HEK293 (cell line): ENCODE measurements at regions of chr2 and their contacts with region 1.

Region 1: DNA sequence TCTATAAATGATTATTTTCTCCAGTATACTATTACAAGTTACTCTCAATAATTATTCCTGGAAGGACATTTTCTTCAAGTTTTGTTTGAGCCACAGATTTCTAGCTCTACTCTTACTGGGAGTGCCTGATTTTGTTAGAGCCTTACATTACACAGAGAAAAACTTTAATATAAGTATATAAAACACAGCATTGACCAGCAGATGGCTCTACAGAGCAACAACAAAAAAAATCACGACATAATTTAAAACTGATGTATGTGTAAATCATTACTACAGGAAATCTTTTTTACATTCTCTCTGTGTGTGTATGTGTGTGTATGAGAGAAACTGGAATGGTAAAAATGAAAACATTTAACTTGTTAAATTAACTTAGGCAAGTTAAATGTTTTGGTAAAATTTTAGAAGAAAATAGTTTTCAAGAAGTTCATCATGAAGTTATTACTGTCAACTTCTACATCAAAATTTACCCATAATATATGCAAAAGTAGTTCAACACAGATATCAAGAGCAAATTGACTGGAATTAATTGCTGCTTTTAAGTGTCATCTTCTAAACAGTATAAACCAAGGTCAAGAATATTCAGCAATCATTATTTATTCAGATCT is 103.3 kb downstream of the MDH1 start:
- H3K4me3 ChIP-seq: no peak overlapping the region
- H3K27ac ChIP-seq: no peak overlapping the region
- H3K4me1 ChIP-seq: no peaks in the 10 kb centered on the region
- CTCF ChIP-seq: no peak

Region 2: DNA sequence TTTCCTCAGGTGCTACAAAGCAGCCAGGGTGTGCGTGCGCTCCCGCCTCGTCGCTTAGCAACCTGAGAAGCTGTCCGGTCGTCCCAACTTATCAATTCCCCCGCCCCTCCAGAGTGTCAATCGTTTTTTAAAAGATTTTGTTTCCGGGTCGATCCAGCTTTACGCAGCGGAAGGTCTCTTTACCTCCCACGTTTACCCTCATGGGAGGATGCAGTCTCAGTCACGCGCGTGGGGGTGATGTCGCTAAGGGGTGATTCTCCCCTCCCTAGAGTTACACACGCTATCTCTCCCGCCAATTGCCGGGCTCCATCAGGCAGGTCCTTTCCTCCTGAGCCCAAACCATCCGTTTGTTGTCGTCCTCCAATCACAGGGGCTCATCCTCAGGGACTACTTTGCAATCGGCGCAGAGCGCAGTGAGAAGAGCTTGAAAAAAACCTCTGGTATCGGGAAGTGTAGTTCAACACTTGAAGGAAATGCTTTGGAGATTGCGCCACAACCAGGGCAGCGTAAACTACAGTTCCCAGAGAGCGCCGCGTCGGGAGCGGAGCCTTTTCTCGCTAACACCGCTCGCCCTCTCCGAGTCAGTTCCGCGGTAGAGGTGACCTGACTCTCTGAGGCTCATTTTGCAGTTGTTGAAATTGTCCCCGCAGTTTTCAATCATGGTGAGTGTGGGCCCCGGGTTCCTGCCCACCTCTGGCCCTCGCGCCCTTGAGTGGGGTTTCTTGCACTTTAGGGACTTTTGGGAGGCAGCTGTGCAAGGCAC is 103.5 kb before region 1 on chr2 and contains the starts of genes MDH1 and WDPCP:
- CTCF ChIA-PET with region 1: no interaction called
- POLR2A ChIA-PET with region 1: no interaction called
- H3K4me3 ChIP-seq: peak within 1 kb of the TSS; percentile 100
- H3K27ac ChIP-seq: peak within 1 kb of the TSS; percentile 74
- H3K4me1 ChIP-seq: peaks cover 19% of the 10 kb centered on the region
- CTCF ChIP-seq: no peak

Region 3: GRCh38 chr2:63681896-63682295 is 10.2 kb before region 1 on chr2:
- CTCF ChIA-PET with region 1: interaction called, 11 read pairs
- POLR2A ChIA-PET with region 1: no interaction called
- H3K4me3 ChIP-seq: no peak overlapping the region
- H3K27ac ChIP-seq: no peak overlapping the region
- H3K4me1 ChIP-seq: no peaks in the 10 kb centered on the region
- CTCF ChIP-seq: no peak

Region 4: GRCh38 chr2:63888490-63889402 is 196.6 kb after region 1 on chr2:
- CTCF ChIA-PET with region 1: interaction called, 14 read pairs
- POLR2A ChIA-PET with region 1: no interaction called
- H3K4me3 ChIP-seq: no peak overlapping the region
- H3K27ac ChIP-seq: no peak overlapping the region
- H3K4me1 ChIP-seq: no peaks in the 10 kb centered on the region
- CTCF ChIP-seq: peak; percentile 61; the same call in 1 of the 2 replicates

Region 5: GRCh38 chr2:64260817-64261216 is 568.7 kb after region 1 on chr2:
- CTCF ChIA-PET with region 1: no interaction called
- POLR2A ChIA-PET with region 1: no interaction called
- H3K4me3 ChIP-seq: no peak overlapping the region
- H3K27ac ChIP-seq: no peak overlapping the region
- H3K4me1 ChIP-seq: no peaks in the 10 kb centered on the region
- CTCF ChIP-seq: no peak